ENCODE measurements at regions of chr19 and their contacts with region 1.

Region 1: DNA sequence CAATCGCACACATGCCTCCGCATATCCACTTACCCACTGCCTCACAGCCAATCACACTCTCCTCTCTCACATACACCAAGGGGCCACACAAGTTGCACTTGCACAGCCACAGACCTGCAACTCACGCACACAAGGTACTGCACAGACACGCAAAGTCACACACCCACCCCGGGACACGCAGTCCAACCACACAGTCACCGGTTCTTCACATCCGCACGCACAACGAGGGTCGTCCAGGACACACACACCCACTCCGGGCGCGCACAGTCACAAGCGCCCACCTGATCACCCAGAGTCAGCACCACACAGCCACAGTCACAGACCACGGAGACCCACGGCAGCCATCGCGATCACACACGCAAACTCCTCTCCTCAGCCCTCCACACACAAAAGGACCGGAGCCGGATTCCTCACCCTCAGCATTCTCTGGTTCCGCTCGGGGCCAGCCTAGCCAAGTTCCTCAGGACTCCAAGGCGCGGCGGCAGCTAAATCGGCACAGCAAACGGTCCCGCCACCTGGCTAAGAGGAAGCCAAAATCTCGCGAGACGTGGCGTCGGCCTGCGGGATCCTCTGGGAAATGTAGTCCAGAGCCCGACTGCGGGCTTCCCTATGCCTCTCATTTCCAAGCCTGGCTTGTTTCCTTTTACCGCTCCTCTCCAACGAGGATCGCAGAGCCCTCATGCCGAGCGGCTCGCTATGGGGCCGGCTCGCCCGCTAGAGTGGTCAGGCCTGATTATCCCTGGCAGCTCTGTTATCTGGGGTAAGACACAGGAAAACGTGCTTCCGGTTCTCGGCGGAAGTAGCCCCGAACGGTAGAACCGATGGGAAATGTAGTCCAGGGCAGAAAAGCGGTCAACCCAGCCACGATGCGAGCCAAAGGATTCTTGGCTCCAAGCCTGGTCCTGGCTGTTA is at the start of gene ZNF850:
- DNase-seq: peak; percentile 94 to 98 (median 95)
- H3K4me3 ChIP-seq: peak within 1 kb of the TSS; percentile 85 to 90
- H3K4me3 Mint-ChIP-seq: peak within 1 kb of the TSS; percentile 94 to 100 (median 98)
- H3K27ac ChIP-seq: peak within 1 kb of the TSS; percentile 81
- H3K27ac Mint-ChIP-seq: peak within 1 kb of the TSS; percentile 91 to 97 (median 95)
- H3K4me1 ChIP-seq: peaks cover 19% of the 10 kb centered on the region
- H3K4me1 Mint-ChIP-seq: peaks cover 18 to 27% (median 24%) of the 10 kb centered on the region in 4 donors
- H3K27me3 ChIP-seq: no peaks in the 10 kb centered on the region
- H3K27me3 Mint-ChIP-seq: peaks cover 0 to 2% of the 10 kb centered on the region in 2 donors
- total RNA-seq, gene ZNF850: 3.7 to 5.4 TPM

Region 2: GRCh38 chr19:36489118-36489919 is 283.2 kb before region 1 on chr19 and contains the start of gene ZNF566:
- CTCF ChIA-PET with region 1: no interaction called
- POLR2A ChIA-PET with region 1: interaction called, 4 read pairs
- intact Hi-C with region 1: loop called (anchors 1 kb)
- DNase-seq: peak; percentile 94 to 98 (median 96)
- H3K4me3 ChIP-seq: peak within 1 kb of the TSS; percentile 92 to 99
- H3K4me3 Mint-ChIP-seq: peak within 1 kb of the TSS; percentile 97 to 100 (median 98)
- H3K27ac ChIP-seq: peak within 1 kb of the TSS; percentile 93
- H3K27ac Mint-ChIP-seq: peak within 1 kb of the TSS; percentile 98 to 99 (median 98)
- H3K4me1 ChIP-seq: peaks cover 24% of the 10 kb centered on the region
- H3K4me1 Mint-ChIP-seq: peaks cover 22 to 36% (median 28%) of the 10 kb centered on the region in 4 donors
- H3K27me3 ChIP-seq: no peaks in the 10 kb centered on the region
- H3K27me3 Mint-ChIP-seq: no peaks in the 10 kb centered on the region
- total RNA-seq, gene ZNF566: 25.9 to 30.6 TPM

Region 3: GRCh38 chr19:36573020-36573885 is 199.3 kb before region 1 on chr19 and contains the start of gene ZNF529:
- CTCF ChIA-PET with region 1: no interaction called
- POLR2A ChIA-PET with region 1: no interaction called
- intact Hi-C with region 1: loop called (anchors 1 kb)
- DNase-seq: peak; percentile 86 to 98 (median 89)
- H3K4me3 ChIP-seq: peak within 1 kb of the TSS; percentile 70 to 86
- H3K4me3 Mint-ChIP-seq: peak within 1 kb of the TSS; percentile 89 to 98 (median 96)
- H3K27ac ChIP-seq: peak within 1 kb of the TSS; percentile 95
- H3K27ac Mint-ChIP-seq: peak within 1 kb of the TSS; percentile 93 to 100 (median 98)
- H3K4me1 ChIP-seq: peaks cover 22% of the 10 kb centered on the region
- H3K4me1 Mint-ChIP-seq: peaks cover 25 to 39% (median 34%) of the 10 kb centered on the region in 4 donors
- H3K27me3 ChIP-seq: no peaks in the 10 kb centered on the region
- H3K27me3 Mint-ChIP-seq: no peaks in the 10 kb centered on the region
- total RNA-seq, gene ZNF529: 32.8 to 33.5 TPM

Region 4: DNA sequence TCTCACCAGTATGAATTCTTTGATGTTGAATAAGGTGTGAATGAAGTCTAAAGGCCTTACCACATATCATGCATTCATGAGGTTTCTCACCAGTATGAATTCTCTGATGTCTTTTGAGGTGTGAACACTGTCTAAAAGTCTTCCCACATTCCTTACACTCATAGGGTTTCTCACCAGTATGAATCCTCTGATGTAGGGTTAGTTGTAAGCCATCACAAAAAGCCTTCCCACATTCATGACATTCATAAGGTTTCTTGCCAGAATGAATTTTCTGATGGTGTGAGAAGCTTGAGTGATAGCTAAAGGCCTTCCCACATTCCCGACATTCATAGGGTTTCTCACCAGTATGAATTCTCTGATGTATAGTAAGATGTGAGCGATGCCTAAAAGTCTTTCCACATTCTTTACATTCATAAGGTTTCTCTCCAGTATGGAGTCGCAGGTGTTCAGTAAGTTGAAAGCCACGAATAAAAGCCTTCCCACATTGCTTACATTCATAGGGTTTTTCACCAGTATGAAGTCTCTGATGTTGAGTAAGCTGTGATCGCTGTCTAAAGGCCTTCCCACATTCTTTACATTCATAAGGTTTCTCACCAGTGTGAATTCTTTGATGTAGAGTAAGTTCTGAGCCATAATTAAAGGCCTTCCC is 133.6 kb before region 1 on chr19:
- CTCF ChIA-PET with region 1: no interaction called
- POLR2A ChIA-PET with region 1: no interaction called
- intact Hi-C with region 1: no loop called
- DNase-seq: no peak
- H3K4me3 ChIP-seq: no peak overlapping the region
- H3K4me3 Mint-ChIP-seq: no peak overlapping the region
- H3K27ac ChIP-seq: no peak overlapping the region
- H3K27ac Mint-ChIP-seq: no peak overlapping the region
- H3K4me1 ChIP-seq: no peaks in the 10 kb centered on the region
- H3K4me1 Mint-ChIP-seq: no peaks in the 10 kb centered on the region
- H3K27me3 ChIP-seq: no peaks in the 10 kb centered on the region
- H3K27me3 Mint-ChIP-seq: no peaks in the 10 kb centered on the region

Region 5: GRCh38 chr19:36687214-36688056 is 85.1 kb before region 1 on chr19 and contains the start of gene ZNF567:
- CTCF ChIA-PET with region 1: no interaction called
- POLR2A ChIA-PET with region 1: no interaction called
- intact Hi-C with region 1: loop called (anchors 1 kb)
- DNase-seq: peak; percentile 94 to 96 (median 95)
- H3K4me3 ChIP-seq: peak within 1 kb of the TSS; percentile 62 to 80
- H3K4me3 Mint-ChIP-seq: peak within 1 kb of the TSS; percentile 97 to 100 (median 99)
- H3K27ac ChIP-seq: peak within 1 kb of the TSS; percentile 75
- H3K27ac Mint-ChIP-seq: peak within 1 kb of the TSS; percentile 95 to 99 (median 97)
- H3K4me1 ChIP-seq: peaks cover 22% of the 10 kb centered on the region
- H3K4me1 Mint-ChIP-seq: peaks cover 22 to 49% (median 30%) of the 10 kb centered on the region in 4 donors
- H3K27me3 ChIP-seq: no peaks in the 10 kb centered on the region
- H3K27me3 Mint-ChIP-seq: no peaks in the 10 kb centered on the region
- total RNA-seq, gene ZNF567: 17.0 to 19.8 TPM

Region 6: GRCh38 chr19:36748431-36749275 is 23.9 kb before region 1 on chr19:
- CTCF ChIA-PET with region 1: no interaction called
- POLR2A ChIA-PET with region 1: no interaction called
- intact Hi-C with region 1: no loop called
- DNase-seq: peak in 1 of 5 donors; percentile 2
- H3K4me3 ChIP-seq: peak overlapping the region in 1 of 2 donors; percentile 6
- H3K4me3 Mint-ChIP-seq: no peak overlapping the region
- H3K27ac ChIP-seq: no peak overlapping the region
- H3K27ac Mint-ChIP-seq: no peak overlapping the region
- H3K4me1 ChIP-seq: no peaks in the 10 kb centered on the region
- H3K4me1 Mint-ChIP-seq: no peaks in the 10 kb centered on the region
- H3K27me3 ChIP-seq: no peaks in the 10 kb centered on the region
- H3K27me3 Mint-ChIP-seq: no peaks in the 10 kb centered on the region

Region 7: GRCh38 chr19:36837906-36838783 is 65.6 kb after region 1 on chr19 and contains the start of gene ZNF790:
- CTCF ChIA-PET with region 1: no interaction called
- POLR2A ChIA-PET with region 1: interaction called, 18 read pairs
- intact Hi-C with region 1: loop called (anchors 1 kb)
- DNase-seq: peak; percentile 88 to 94 (median 91)
- H3K4me3 ChIP-seq: peak within 1 kb of the TSS; percentile 48 to 97
- H3K4me3 Mint-ChIP-seq: peak within 1 kb of the TSS in 4 of 8 donors; percentile 31 to 71 (median 44)
- H3K27ac ChIP-seq: peak within 1 kb of the TSS; percentile 73
- H3K27ac Mint-ChIP-seq: peak within 1 kb of the TSS in 2 of 7 donors; percentile 45 to 54
- H3K4me1 ChIP-seq: peaks cover 18% of the 10 kb centered on the region
- H3K4me1 Mint-ChIP-seq: peaks cover 0 to 13% (median 5%) of the 10 kb centered on the region in 4 donors
- H3K27me3 ChIP-seq: no peaks in the 10 kb centered on the region
- H3K27me3 Mint-ChIP-seq: no peaks in the 10 kb centered on the region
- total RNA-seq, gene ZNF790: 12.4 to 13.4 TPM

Region 8: DNA sequence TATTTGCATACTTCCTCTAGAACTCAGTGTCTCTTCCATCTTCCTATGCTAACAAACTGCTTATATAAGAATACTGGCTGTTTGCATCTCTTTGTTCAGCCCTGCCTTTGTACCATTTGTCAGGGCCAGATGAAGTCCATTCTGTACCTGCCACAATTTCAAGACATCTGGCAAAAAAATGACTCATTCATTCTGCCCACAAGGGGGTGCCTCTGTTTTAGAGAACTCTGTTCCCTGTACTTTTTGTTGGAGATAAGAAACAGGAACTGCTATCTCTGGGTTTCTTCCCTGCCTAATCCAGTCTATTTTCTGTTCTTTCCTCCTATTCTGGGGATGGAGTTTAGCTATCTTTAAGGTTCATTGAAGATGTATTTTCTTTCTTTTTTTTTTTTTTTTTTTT is 166.6 kb after region 1 on chr19:
- CTCF ChIA-PET with region 1: no interaction called
- POLR2A ChIA-PET with region 1: no interaction called
- intact Hi-C with region 1: no loop called
- DNase-seq: no peak
- H3K4me3 ChIP-seq: no peak overlapping the region
- H3K4me3 Mint-ChIP-seq: no peak overlapping the region
- H3K27ac ChIP-seq: no peak overlapping the region
- H3K27ac Mint-ChIP-seq: no peak overlapping the region
- H3K4me1 ChIP-seq: no peaks in the 10 kb centered on the region
- H3K4me1 Mint-ChIP-seq: peaks cover 0 to 1% (median 0%) of the 10 kb centered on the region in 4 donors
- H3K27me3 ChIP-seq: no peaks in the 10 kb centered on the region
- H3K27me3 Mint-ChIP-seq: no peaks in the 10 kb centered on the region

Region 9: GRCh38 chr19:36973021-36973843 is 200.7 kb after region 1 on chr19:
- CTCF ChIA-PET with region 1: no interaction called
- POLR2A ChIA-PET with region 1: no interaction called
- intact Hi-C with region 1: loop called (anchors 2 kb)
- DNase-seq: peak; percentile 76 to 85 (median 77)
- H3K4me3 ChIP-seq: peak overlapping the region; percentile 80 to 86
- H3K4me3 Mint-ChIP-seq: peak overlapping the region; percentile 91 to 98 (median 96)
- H3K27ac ChIP-seq: peak overlapping the region; percentile 68
- H3K27ac Mint-ChIP-seq: peak overlapping the region; percentile 82 to 97 (median 94)
- H3K4me1 ChIP-seq: peaks cover 16% of the 10 kb centered on the region
- H3K4me1 Mint-ChIP-seq: peaks cover 8 to 22% (median 12%) of the 10 kb centered on the region in 4 donors
- H3K27me3 ChIP-seq: no peaks in the 10 kb centered on the region
- H3K27me3 Mint-ChIP-seq: no peaks in the 10 kb centered on the region

Region 10: GRCh38 chr19:37172368-37173366 is 400.1 kb after region 1 on chr19 and contains the start of gene ZNF585A:
- CTCF ChIA-PET with region 1: no interaction called
- POLR2A ChIA-PET with region 1: no interaction called
- intact Hi-C with region 1: loop called (anchors 2 kb)
- DNase-seq: peak; percentile 90 to 94 (median 92)
- H3K4me3 ChIP-seq: peak within 1 kb of the TSS; percentile 81 to 82
- H3K4me3 Mint-ChIP-seq: peak within 1 kb of the TSS in 3 of 8 donors; percentile 12 to 51 (median 26)
- H3K27ac ChIP-seq: peak within 1 kb of the TSS; percentile 61
- H3K27ac Mint-ChIP-seq: no peak within 1 kb of the TSS
- H3K4me1 ChIP-seq: peaks cover 17% of the 10 kb centered on the region
- H3K4me1 Mint-ChIP-seq: peaks cover 0 to 2% (median 0%) of the 10 kb centered on the region in 4 donors
- H3K27me3 ChIP-seq: no peaks in the 10 kb centered on the region
- H3K27me3 Mint-ChIP-seq: no peaks in the 10 kb centered on the region
- total RNA-seq, gene ZNF585A: 16.5 to 25.4 TPM

Measured in CD4-positive, alpha-beta memory T cell (primary cell).